ENCODE measurements at regions of chr4 and their contacts with region 1.

Region 1: GRCh38 chr4:108512615-108513505 is 107.5 kb upstream of the RPL34 start:
- DNase-seq: peak in 4 of 5 donors; percentile 25 to 31 (median 27)
- ATAC-seq: peak in 3 of 4 donors; percentile 63 to 79 (median 70)
- H3K4me3 ChIP-seq: no peak overlapping the region
- H3K27ac ChIP-seq: no peak overlapping the region
- H3K4me1 ChIP-seq: peaks cover 0 to 10% (median 0%) of the 10 kb centered on the region in 12 donors
- H3K27me3 ChIP-seq: peaks cover 0 to 24% (median 0%) of the 10 kb centered on the region in 9 donors
- CTCF ChIP-seq: peak in 11 of 12 donors; percentile 25 to 61 (median 43)
- POLR2A ChIP-seq: no peak

Region 2: GRCh38 chr4:108018040-108018883 is 494.6 kb before region 1 on chr4:
- intact Hi-C with region 1: loop called in 1 of 10 experiments (anchors 5 kb)
- DNase-seq: peak; percentile 73 to 86 (median 76)
- ATAC-seq: peak in 3 of 4 donors; percentile 72 to 81 (median 81)
- H3K4me3 ChIP-seq: no peak overlapping the region
- H3K27ac ChIP-seq: peak overlapping the region in 2 of 12 donors; percentile 1 to 26
- H3K4me1 ChIP-seq: peaks cover 0 to 23% (median 0%) of the 10 kb centered on the region in 12 donors
- H3K27me3 ChIP-seq: no peaks in the 10 kb centered on the region
- CTCF ChIP-seq: peak; percentile 81 to 92 (median 86)
- POLR2A ChIP-seq: no peak

Region 3: GRCh38 chr4:108060164-108060563 is 452.7 kb before region 1 on chr4:
- intact Hi-C with region 1: loop called in 6 of 10 experiments (anchors 2 to 10 kb)
- DNase-seq: no peak
- ATAC-seq: peak in 3 of 4 donors; percentile 55 to 74 (median 68)
- H3K4me3 ChIP-seq: no peak overlapping the region
- H3K27ac ChIP-seq: no peak overlapping the region
- H3K4me1 ChIP-seq: no peaks in the 10 kb centered on the region
- H3K27me3 ChIP-seq: peaks cover 0 to 9% (median 0%) of the 10 kb centered on the region in 9 donors
- CTCF ChIP-seq: peak in 10 of 12 donors; percentile 11 to 56 (median 37)
- POLR2A ChIP-seq: no peak

Region 4: GRCh38 chr4:108172753-108173598 is 339.9 kb before region 1 on chr4:
- intact Hi-C with region 1: no loop called
- DNase-seq: peak; percentile 32 to 67 (median 42)
- ATAC-seq: peak in 3 of 4 donors; percentile 76 to 86 (median 84)
- H3K4me3 ChIP-seq: peak overlapping the region; percentile 32 to 70 (median 58)
- H3K27ac ChIP-seq: peak overlapping the region in 6 of 12 donors; percentile 17 to 70 (median 54)
- H3K4me1 ChIP-seq: peaks cover 0 to 33% (median 15%) of the 10 kb centered on the region in 12 donors
- H3K27me3 ChIP-seq: peaks cover 12 to 73% (median 59%) of the 10 kb centered on the region in 9 donors
- CTCF ChIP-seq: no peak
- POLR2A ChIP-seq: no peak

Region 5: GRCh38 chr4:108683479-108683878 is 170.6 kb after region 1 on chr4:
- intact Hi-C with region 1: no loop called
- DNase-seq: no peak
- ATAC-seq: no peak
- H3K4me3 ChIP-seq: no peak overlapping the region
- H3K27ac ChIP-seq: no peak overlapping the region
- H3K4me1 ChIP-seq: peaks cover 0 to 5% (median 0%) of the 10 kb centered on the region in 12 donors
- H3K27me3 ChIP-seq: no peaks in the 10 kb centered on the region
- CTCF ChIP-seq: peak in 7 of 12 donors; percentile 7 to 42 (median 19)
- POLR2A ChIP-seq: no peak